Calu3 (cell line): ENCODE measurements at regions of chr4 and their contacts with region 1.

Region 1: DNA sequence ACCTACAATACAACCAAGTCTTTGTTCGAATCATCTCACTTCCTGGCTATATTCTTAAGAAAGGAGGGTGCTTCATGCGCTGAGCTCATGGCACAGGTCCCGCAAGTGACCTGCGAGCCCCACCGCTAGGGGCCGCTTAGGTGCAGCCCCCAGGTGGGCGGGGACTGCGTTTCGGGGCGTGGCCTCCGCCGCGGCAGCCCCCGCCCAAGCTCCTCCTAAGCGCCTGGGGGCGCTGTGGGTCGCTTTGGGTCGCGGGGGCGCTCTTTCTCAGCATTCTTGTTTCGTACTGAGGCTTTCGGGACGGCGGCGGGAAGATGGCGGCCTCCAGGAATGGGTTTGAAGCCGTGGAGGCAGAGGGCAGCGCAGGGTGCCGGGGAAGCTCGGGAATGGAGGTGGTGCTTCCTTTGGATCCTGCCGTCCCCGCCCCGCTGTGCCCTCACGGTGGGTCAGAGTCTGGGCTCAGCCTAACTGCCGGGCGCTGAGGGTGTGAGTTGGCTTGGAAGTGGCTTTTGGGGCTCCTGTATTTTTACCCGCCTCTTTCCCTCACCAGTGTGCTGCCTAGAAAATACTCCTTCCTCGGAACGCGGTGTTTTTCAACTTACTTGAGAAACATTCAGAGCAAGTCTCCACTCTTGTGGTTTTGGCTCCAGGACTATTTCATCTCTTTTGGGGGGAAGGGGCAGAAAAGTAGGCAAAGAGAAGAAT is at the start of gene ZCCHC4:
- DNase-seq: peak; percentile 83
- H3K4me3 Mint-ChIP-seq: peak within 1 kb of the TSS; percentile 97
- H3K27ac Mint-ChIP-seq: peak within 1 kb of the TSS; percentile 95
- H3K4me1 Mint-ChIP-seq: peaks cover 9% of the 10 kb centered on the region
- H3K27me3 Mint-ChIP-seq: no peaks in the 10 kb centered on the region
- CTCF ChIP-seq: peak; percentile 82
- total RNA-seq, gene ZCCHC4: 8.7 and 10.1 TPM in 2 replicates

Region 2: DNA sequence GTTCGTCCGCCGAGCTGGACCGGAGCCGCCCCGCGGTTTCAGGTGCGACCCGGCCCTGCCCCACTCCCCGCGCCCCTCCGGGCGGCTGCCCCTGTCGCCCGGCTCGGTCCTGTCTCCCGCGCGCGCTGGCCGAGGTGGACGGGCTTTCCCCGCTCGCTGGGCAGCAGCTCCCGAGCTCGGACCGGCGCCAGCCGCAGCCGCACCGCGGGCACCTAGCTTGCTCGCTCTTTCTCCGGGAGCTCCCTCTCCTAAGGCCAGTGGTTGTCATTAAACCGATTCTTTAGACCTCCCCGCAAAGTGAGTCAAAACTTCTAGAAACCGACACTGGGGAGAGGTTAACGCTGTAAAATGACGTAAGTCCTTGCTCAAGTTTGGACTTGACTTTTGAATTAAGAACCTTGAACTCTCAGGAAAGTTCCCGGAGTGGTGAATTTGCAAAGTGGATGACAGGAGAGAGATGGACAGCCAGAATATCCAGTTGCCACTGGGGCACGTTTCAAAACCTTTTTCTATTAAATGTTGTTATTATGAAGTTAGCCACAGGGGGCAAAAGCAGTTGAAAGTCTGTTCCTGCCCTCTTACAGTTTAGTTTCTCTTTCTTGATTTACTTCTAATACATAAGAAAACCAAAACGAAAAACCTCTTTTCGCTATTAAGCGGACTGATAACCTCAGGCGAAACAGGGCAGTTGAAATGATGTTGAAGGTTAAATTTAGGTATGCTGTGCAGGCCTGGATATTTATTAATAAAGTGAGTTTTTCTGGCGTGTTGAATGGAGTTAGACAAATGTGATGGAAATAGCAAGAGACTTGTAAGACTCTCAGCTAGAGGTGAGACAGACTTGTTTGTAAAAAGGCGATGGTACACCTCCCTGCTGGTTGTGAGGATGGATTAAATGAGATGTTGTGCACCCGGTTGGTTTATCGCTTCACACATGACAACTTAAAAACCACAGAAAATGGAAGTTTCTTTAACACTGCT is 78.0 kb before region 1 on chr4:
- CTCF ChIA-PET with region 1: interaction called, 13 read pairs
- intact Hi-C with region 1: no loop called
- DNase-seq: peak; percentile 30
- H3K4me3 Mint-ChIP-seq: peak overlapping the region; percentile 82
- H3K27ac Mint-ChIP-seq: peak overlapping the region; percentile 85
- H3K4me1 Mint-ChIP-seq: peaks cover 7% of the 10 kb centered on the region
- H3K27me3 Mint-ChIP-seq: no peaks in the 10 kb centered on the region
- CTCF ChIP-seq: no peak

Region 3: DNA sequence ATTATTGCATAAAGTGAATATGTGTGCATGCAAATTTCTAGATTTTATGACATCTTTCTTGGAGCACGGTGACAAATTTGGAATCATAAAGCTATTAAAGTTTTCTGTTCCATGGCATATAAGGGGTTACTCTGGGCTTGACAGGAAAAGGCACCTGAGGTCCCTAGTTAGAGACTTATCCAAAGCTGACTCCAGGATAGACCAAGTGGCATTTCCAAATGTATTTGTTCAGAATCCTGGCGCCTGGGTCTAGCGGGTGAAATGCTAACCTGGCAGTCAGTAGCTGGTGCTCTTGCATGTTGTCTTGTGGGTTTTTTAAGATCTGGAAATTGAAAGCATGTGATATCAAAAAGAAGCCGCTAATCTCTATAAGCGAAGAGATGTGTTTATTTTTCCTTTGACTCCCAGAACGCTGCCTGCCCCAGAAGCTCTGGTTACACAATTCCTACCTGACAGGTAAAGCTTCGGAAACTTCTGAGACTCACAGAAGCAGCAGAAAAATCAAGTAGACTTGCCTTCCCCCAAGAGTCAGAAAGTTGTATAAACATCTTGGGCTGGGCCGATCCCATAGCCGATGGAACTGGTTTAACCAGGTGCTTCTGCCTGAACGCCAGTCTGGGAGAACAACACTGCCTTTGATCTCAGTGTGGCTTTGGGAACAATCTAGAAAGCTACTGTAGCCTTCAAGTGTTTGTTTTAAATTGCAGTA is 13.0 kb before region 1 on chr4:
- CTCF ChIA-PET with region 1: interaction called, 32 read pairs
- intact Hi-C with region 1: no loop called
- DNase-seq: peak; percentile 75
- H3K4me3 Mint-ChIP-seq: peak overlapping the region; percentile 53
- H3K27ac Mint-ChIP-seq: peak overlapping the region; percentile 39
- H3K4me1 Mint-ChIP-seq: no peaks in the 10 kb centered on the region
- H3K27me3 Mint-ChIP-seq: no peaks in the 10 kb centered on the region
- CTCF ChIP-seq: no peak

Region 4: GRCh38 chr4:25358515-25359275 is 46.0 kb after region 1 on chr4:
- CTCF ChIA-PET with region 1: interaction called, 3 read pairs
- intact Hi-C with region 1: loop called (anchors 5 kb)
- DNase-seq: peak; percentile 65
- H3K4me3 Mint-ChIP-seq: no peak overlapping the region
- H3K27ac Mint-ChIP-seq: peak overlapping the region; percentile 83
- H3K4me1 Mint-ChIP-seq: peaks cover 20% of the 10 kb centered on the region
- H3K27me3 Mint-ChIP-seq: no peaks in the 10 kb centered on the region
- CTCF ChIP-seq: no peak

Region 5: GRCh38 chr4:25367004-25367621 is 54.5 kb after region 1 on chr4:
- CTCF ChIA-PET with region 1: interaction called, 10 read pairs
- intact Hi-C with region 1: no loop called
- DNase-seq: no peak
- H3K4me3 Mint-ChIP-seq: no peak overlapping the region
- H3K27ac Mint-ChIP-seq: no peak overlapping the region
- H3K4me1 Mint-ChIP-seq: peaks cover 6% of the 10 kb centered on the region
- H3K27me3 Mint-ChIP-seq: no peaks in the 10 kb centered on the region
- CTCF ChIP-seq: no peak

Region 6: DNA sequence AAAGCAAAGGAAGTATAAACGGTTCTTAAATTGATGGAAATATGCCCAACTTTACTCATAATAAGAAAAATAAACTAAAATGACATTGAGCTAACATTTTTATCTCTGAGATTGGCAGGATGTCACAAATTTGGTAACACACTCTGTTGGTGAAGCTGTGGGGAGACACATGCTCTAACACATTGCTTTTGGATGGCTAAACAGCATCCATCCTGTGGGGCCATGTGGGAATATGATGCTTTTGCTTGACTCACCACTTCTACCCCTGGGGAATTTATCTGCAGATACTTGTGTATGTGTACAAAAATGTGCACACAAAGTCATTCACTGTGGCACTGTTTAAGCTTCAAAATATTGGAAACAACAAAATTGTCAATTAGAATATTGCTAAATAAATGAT is 164.6 kb after region 1 on chr4:
- CTCF ChIA-PET with region 1: no interaction called
- intact Hi-C with region 1: no loop called
- DNase-seq: no peak
- H3K4me3 Mint-ChIP-seq: no peak overlapping the region
- H3K27ac Mint-ChIP-seq: no peak overlapping the region
- H3K4me1 Mint-ChIP-seq: no peaks in the 10 kb centered on the region
- H3K27me3 Mint-ChIP-seq: no peaks in the 10 kb centered on the region
- CTCF ChIP-seq: no peak